Common myeloid progenitor, CD34-positive (primary cell): ENCODE measurements at regions of chr7 and their contacts with region 1.

Region 1: DNA sequence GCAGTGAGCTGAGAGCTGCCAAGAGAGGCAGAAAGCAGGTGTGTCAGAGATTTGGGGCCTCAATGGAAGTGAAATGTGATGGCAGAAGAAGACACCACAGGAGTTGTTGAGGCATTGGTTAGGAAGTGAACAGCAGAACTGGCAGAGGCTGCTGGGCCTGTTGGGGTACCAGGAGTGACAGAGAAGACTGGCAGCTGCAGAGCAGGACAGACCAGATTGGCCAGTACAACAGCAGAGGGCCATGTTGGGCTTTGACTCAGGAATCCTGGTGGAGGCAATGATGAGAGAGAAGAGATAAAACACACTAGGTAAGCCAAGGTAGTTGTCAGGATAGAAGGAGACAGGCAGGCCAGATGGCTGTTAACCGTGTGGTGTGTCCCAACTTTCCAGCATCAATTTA is 19.9 kb upstream of the HERPUD2 start:
- DNase-seq: no peak
- H3K4me3 ChIP-seq: no peak overlapping the region
- H3K27ac ChIP-seq: no peak overlapping the region
- H3K4me1 ChIP-seq: peaks cover 0 to 2% (median 1%) of the 10 kb centered on the region in 4 experiments
- H3K27me3 ChIP-seq: no peaks in the 10 kb centered on the region

Region 2: GRCh38 chr7:35701287-35701900 is 13.5 kb before region 1 on chr7:
- CTCF ChIA-PET with region 1: interaction called, 11 read pairs
- POLR2A ChIA-PET with region 1: no interaction called
- DNase-seq: no peak
- H3K4me3 ChIP-seq: no peak overlapping the region
- H3K27ac ChIP-seq: no peak overlapping the region
- H3K4me1 ChIP-seq: peaks cover 0 to 4% (median under 1%) of the 10 kb centered on the region in 4 experiments
- H3K27me3 ChIP-seq: no peaks in the 10 kb centered on the region

Region 3: GRCh38 chr7:35735396-35735795 is 20.5 kb after region 1 on chr7:
- CTCF ChIA-PET with region 1: no interaction called
- POLR2A ChIA-PET with region 1: no interaction called
- DNase-seq: no peak
- H3K4me3 ChIP-seq: no peak overlapping the region
- H3K27ac ChIP-seq: no peak overlapping the region
- H3K4me1 ChIP-seq: peaks cover 0 to 12% (median 0%) of the 10 kb centered on the region in 4 experiments
- H3K27me3 ChIP-seq: no peaks in the 10 kb centered on the region

Region 4: GRCh38 chr7:35906191-35906908 is 191.5 kb after region 1 on chr7:
- CTCF ChIA-PET with region 1: interaction called, 10 read pairs
- POLR2A ChIA-PET with region 1: no interaction called
- DNase-seq: peak; percentile 81 to 92 (median 88)
- H3K4me3 ChIP-seq: no peak overlapping the region
- H3K27ac ChIP-seq: no peak overlapping the region
- H3K4me1 ChIP-seq: no peaks in the 10 kb centered on the region
- H3K27me3 ChIP-seq: no peaks in the 10 kb centered on the region